ENCODE measurements at regions of chr16 and their contacts with region 1.

Region 1: GRCh38 chr16:8850279-8850885 is 18.4 kb downstream of the CARHSP1 start:
- DNase-seq: peak; percentile 91
- ATAC-seq: peak; percentile 89
- H3K4me3 ChIP-seq: no peak overlapping the region
- H3K27ac ChIP-seq: peak overlapping the region; percentile 44
- H3K4me1 ChIP-seq: peaks cover 31% of the 10 kb centered on the region
- H3K27me3 ChIP-seq: no peaks in the 10 kb centered on the region
- CTCF ChIP-seq: no peak
- EP300 ChIP-seq: peak in 1 of 2 experiments; percentile 49; a peak in 1 of 4 replicates
- POLR2A ChIP-seq: peak; percentile 45 to 53; a peak in 2 of 4 replicates
- RAD21 ChIP-seq: peak; percentile 66; the same call in 1 of the 2 replicates

Region 2: DNA sequence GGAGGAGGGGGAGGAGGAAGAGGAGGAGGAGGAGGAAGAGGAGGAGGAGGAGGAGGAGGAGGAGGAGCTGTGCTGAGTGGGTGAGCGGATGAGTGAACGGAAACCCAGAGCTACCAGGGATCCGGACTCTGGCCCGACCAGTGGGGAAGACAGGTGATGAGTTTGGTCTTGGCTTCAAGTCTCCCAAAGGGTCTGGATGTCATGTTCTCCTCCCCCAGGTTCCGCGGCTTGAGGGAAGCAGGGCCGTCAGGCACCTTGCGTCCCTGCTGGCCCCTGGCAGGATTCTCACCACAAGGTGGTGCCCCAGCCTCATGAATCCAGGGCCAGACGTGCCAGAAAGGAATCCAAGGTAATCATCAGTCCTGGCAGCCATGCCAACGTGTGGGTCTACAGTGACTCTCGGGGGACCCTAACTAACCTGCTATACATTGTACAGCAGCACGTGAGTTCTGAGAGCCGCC is 189.5 kb before region 1 on chr16:
- CTCF ChIA-PET with region 1: no interaction called
- POLR2A ChIA-PET with region 1: no interaction called
- in situ Hi-C with region 1: no loop called
- intact Hi-C with region 1: loop called (anchors 5 kb)
- DNase-seq: peak; percentile 71
- ATAC-seq: peak; percentile 88
- H3K4me3 ChIP-seq: peak overlapping the region in 1 of 3 experiments; percentile 17; a peak in 1 of 6 replicates
- H3K27ac ChIP-seq: no peak overlapping the region
- H3K4me1 ChIP-seq: no peaks in the 10 kb centered on the region
- H3K27me3 ChIP-seq: peaks cover 0 to 2% of the 10 kb centered on the region in 2 experiments; a peak in 2 of 5 replicates
- CTCF ChIP-seq: peak; percentile 99
- EP300 ChIP-seq: no peak
- POLR2A ChIP-seq: no peak
- RAD21 ChIP-seq: peak; percentile 99

Region 3: GRCh38 chr16:8868416-8869211 is 18.2 kb after region 1 on chr16 and contains the start of gene CARHSP1:
- CTCF ChIA-PET with region 1: interaction called, 3 read pairs
- POLR2A ChIA-PET with region 1: interaction called, 105 read pairs
- in situ Hi-C with region 1: no loop called
- intact Hi-C with region 1: loop called (anchors 2 kb)
- DNase-seq: peak; percentile 93
- ATAC-seq: peak; percentile 63
- H3K4me3 ChIP-seq: peak within 1 kb of the TSS; percentile 82 to 97 (median 87)
- H3K27ac ChIP-seq: peak within 1 kb of the TSS; percentile 95
- H3K4me1 ChIP-seq: peaks cover 76% of the 10 kb centered on the region
- H3K27me3 ChIP-seq: no peaks in the 10 kb centered on the region; a peak in 1 of 5 replicates
- CTCF ChIP-seq: no peak
- EP300 ChIP-seq: peak in 1 of 2 experiments; percentile 4; a peak in 1 of 4 replicates
- POLR2A ChIP-seq: peak in 1 of 2 experiments; percentile 88; a peak in 2 of 4 replicates
- RAD21 ChIP-seq: 0 out of 2 replicates have a peak, but pooled peaks have one; percentile 38
- total RNA-seq, gene CARHSP1: 345 and 349 TPM in 2 replicates

Measured in HepG2 (cell line).